Aorta (tissue), 5 donors: ENCODE measurements at regions of chr2 and their contacts with region 1.

Region 1: GRCh38 chr2:237128026-237128703 is 42.5 kb downstream of the COPS8 start:
- DNase-seq: peak; percentile 97
- ATAC-seq: peak; percentile 92
- H3K4me3 ChIP-seq: no peak overlapping the region
- H3K27ac ChIP-seq: no peak overlapping the region
- H3K4me1 ChIP-seq: no peaks in the 10 kb centered on the region
- H3K27me3 ChIP-seq: no peaks in the 10 kb centered on the region

Region 2: GRCh38 chr2:237072067-237072931 is 55.9 kb before region 1 on chr2:
- intact Hi-C with region 1: no loop called
- DNase-seq: peak; percentile 82 to 91
- ATAC-seq: peak; percentile 85
- H3K4me3 ChIP-seq: no peak overlapping the region
- H3K27ac ChIP-seq: no peak overlapping the region
- H3K4me1 ChIP-seq: peaks cover 0 to 5% of the 10 kb centered on the region in 2 donors
- H3K27me3 ChIP-seq: no peaks in the 10 kb centered on the region

Region 3: GRCh38 chr2:237256887-237257286 is 128.7 kb after region 1 on chr2:
- intact Hi-C with region 1: loop called in 1 of 2 experiments (anchors 5 kb)
- DNase-seq: peak in 1 of 2 donors; percentile 79
- ATAC-seq: peak; percentile 81
- H3K4me3 ChIP-seq: no peak overlapping the region
- H3K27ac ChIP-seq: peak overlapping the region in 1 of 2 donors; percentile 41
- H3K4me1 ChIP-seq: peaks cover 0 to 4% of the 10 kb centered on the region in 2 donors
- H3K27me3 ChIP-seq: no peaks in the 10 kb centered on the region